Activated naive CD4-positive, alpha-beta T cell treated with anti-CD3 and anti-CD28 coated beads for 36 hours (primary cell): ENCODE measurements at regions of chr20 and their contacts with region 1.

Region 1: DNA sequence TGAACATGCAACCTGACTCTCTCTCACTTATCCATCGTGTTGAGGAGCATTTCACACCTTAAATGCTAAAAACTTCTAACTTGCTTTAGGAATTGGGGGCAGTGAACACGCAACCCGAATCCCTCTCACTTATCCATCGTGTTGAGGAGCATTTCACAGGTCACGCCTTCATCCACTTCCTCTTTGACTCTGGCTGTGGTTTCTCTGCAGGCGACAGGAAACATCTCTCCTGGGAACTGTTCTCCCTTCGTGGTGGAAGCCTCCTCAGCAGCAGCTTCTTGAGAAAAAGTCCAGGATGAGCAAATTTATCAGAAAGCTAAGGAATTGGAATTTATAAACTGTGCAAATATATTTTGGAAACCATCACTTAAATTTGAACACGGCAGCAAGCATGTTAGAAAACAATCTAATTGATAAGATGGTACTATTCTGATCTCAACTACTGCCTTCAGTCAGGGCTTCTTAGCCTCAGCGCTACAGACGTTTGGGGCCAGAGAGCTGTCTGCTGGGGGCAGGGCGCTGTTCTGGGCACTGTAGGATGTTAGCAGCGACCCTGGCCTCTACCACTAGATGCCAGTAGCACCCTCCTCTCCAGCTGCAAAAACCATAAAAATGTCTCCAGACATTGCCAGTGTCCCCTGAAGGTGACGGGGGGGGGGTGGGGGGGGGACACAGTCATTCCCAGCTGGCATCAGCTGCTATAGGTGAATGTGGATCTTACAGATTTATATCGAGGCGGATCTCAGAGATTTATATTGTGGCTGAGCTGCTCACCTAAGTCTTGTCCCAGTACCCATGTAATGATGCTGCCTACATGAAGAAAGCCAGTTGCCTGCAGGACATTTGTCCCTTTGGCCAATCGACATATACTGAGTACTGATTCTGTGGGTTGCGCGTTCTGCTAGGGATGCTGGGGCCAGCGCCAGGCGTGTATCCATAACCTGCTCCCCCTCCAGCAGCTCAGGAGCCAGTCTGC is 26.2 kb downstream of the CTCFL start:
- DNase-seq: peak; percentile 65
- H3K4me3 Mint-ChIP-seq: no peak overlapping the region
- H3K27ac Mint-ChIP-seq: no peak overlapping the region
- H3K4me1 Mint-ChIP-seq: peaks cover 10% of the 10 kb centered on the region
- H3K27me3 Mint-ChIP-seq: peaks cover 15% of the 10 kb centered on the region

Region 2: GRCh38 chr20:57089691-57090150 is 409.0 kb before region 1 on chr20:
- CTCF ChIA-PET with region 1: interaction called, 3 read pairs
- intact Hi-C with region 1: loop called (anchors 1 kb)
- DNase-seq: peak; percentile 82
- H3K4me3 Mint-ChIP-seq: no peak overlapping the region
- H3K27ac Mint-ChIP-seq: no peak overlapping the region
- H3K4me1 Mint-ChIP-seq: peaks cover 11% of the 10 kb centered on the region
- H3K27me3 Mint-ChIP-seq: peaks cover 9% of the 10 kb centered on the region

Region 3: DNA sequence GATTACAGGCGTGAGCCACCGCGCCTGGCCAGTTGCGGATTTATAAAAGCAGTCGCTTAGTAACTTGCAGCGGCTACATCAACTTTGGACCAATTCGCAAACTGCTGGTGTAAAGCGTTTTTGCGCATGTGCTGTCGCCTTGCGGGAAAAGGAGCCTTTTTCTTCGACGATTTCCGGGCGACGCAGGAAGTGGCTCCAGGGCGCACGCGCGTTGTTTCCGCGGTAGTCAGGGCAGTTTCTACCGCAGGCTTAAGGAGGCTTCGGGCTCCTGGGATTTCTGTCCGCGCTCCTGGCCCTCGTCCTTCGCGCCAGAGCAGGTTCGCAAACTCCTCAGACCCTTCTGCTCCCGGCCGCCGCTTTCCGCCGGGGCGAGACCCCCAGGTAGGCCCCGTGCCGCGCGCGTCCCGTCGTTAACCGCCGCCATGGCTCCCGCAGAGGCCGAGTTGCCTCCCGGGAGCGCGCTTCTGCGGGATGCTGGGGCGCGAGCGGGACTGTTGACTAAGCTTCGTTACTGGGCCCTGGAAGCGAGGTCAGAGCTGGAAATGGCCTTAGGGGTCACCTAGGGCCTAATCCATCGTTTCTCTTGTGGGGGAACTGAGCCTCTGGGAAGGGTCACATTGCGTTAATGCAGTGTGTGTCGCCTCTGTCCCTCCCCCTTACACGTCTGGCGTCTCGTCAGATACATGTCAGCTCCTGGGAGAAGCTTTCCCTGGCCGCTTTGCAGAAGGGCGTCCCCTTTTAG is 147.5 kb before region 1 on chr20 and contains the start of gene RAE1:
- CTCF ChIA-PET with region 1: interaction called, 6 read pairs
- intact Hi-C with region 1: loop called (anchors 1 kb)
- DNase-seq: peak; percentile 94
- H3K4me3 Mint-ChIP-seq: peak within 1 kb of the TSS; percentile 81
- H3K27ac Mint-ChIP-seq: peak within 1 kb of the TSS; percentile 83
- H3K4me1 Mint-ChIP-seq: peaks cover 22% of the 10 kb centered on the region
- H3K27me3 Mint-ChIP-seq: no peaks in the 10 kb centered on the region
- total RNA-seq, gene RAE1: 45.6 to 46.5 TPM

Region 4: GRCh38 chr20:57383447-57384347 is 115.0 kb before region 1 on chr20:
- CTCF ChIA-PET with region 1: interaction called, 33 read pairs
- intact Hi-C with region 1: loop called (anchors 1 kb)
- DNase-seq: no peak
- H3K4me3 Mint-ChIP-seq: no peak overlapping the region
- H3K27ac Mint-ChIP-seq: no peak overlapping the region
- H3K4me1 Mint-ChIP-seq: peaks cover 16% of the 10 kb centered on the region
- H3K27me3 Mint-ChIP-seq: no peaks in the 10 kb centered on the region

Region 5: DNA sequence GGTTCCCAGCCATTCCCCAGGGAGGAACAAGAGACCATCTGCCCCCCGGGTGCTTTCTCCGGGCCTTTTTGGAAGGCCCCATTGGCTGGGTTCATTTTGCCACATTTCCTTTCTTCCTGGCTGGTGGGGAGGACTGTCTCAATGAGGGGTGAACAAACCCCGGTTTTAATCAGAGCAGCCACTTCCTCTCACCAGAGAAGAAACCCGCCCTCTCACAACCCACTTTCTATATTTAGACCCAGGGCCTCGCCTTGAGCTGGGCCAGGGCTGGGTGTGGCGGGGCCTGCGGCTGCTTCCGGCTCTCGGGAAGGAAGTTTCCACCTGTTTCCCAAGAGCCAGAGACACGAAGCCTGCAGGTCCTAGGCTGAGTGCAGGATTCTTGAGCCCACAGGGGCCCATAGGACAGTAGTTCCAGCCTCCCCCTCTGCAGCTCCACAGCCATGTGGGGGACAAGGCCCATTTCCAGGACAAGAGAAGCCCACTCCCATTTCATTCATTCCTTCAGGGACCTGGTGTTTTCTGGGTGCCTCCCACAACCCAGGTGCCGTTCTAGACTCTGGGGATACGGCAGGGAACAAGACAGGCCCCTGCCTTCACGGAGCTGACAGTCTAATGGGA is 65.7 kb before region 1 on chr20:
- CTCF ChIA-PET with region 1: no interaction called
- intact Hi-C with region 1: loop called (anchors 1 kb)
- DNase-seq: peak; percentile 85
- H3K4me3 Mint-ChIP-seq: peak overlapping the region; percentile 18
- H3K27ac Mint-ChIP-seq: peak overlapping the region; percentile 87
- H3K4me1 Mint-ChIP-seq: peaks cover 58% of the 10 kb centered on the region
- H3K27me3 Mint-ChIP-seq: no peaks in the 10 kb centered on the region

Region 6: DNA sequence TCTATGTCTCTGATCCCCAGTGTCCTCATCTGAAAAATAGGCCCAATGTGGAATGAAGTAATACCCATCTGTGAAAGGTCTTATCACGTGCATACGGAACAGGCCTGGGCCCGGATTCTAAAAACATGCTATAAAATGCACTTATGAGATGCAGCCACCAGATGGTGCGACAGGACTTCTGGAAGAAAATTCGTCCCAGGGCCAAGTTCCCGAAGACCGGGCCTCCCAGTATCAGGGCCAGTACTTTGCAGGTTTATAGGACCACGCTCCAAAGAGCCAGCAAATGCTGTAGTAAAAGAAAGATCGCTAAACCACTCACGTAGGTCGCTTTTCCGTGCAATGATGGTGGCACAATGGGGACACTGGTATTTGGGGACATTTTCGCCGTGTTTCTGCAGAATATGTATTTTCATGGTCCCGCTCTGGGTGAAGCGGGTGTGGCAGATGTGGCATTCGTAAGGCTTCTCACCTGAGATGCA is 15.6 kb after region 1 on chr20:
- CTCF ChIA-PET with region 1: interaction called, 14 read pairs
- intact Hi-C with region 1: no loop called
- DNase-seq: peak; percentile 58
- H3K4me3 Mint-ChIP-seq: no peak overlapping the region
- H3K27ac Mint-ChIP-seq: no peak overlapping the region
- H3K4me1 Mint-ChIP-seq: no peaks in the 10 kb centered on the region
- H3K27me3 Mint-ChIP-seq: peaks cover 13% of the 10 kb centered on the region